Caco-2 (cell line): ENCODE measurements at regions of chr3 and their contacts with region 1.

Region 1: GRCh38 chr3:111717601-111718000 is 122.5 kb upstream of the ZBED2 start:
- DNase-seq: peak; percentile 76
- H3K4me3 ChIP-seq: no peak overlapping the region
- H3K4me3 Mint-ChIP-seq: no peak overlapping the region
- H3K27ac Mint-ChIP-seq: peak overlapping the region; percentile 29
- H3K4me1 ChIP-seq: no peaks in the 10 kb centered on the region
- H3K4me1 Mint-ChIP-seq: peaks cover 12% of the 10 kb centered on the region
- H3K27me3 ChIP-seq: no peaks in the 10 kb centered on the region
- H3K27me3 Mint-ChIP-seq: no peaks in the 10 kb centered on the region
- CTCF ChIP-seq: peak; percentile 85 to 90

Region 2: GRCh38 chr3:111577794-111578685 is 139.6 kb before region 1 on chr3:
- CTCF ChIA-PET with region 1: interaction called, 18 read pairs
- POLR2A ChIA-PET with region 1: no interaction called
- intact Hi-C with region 1: loop called (anchors 1 kb)
- DNase-seq: peak in 1 of 2 experiments; percentile 48
- H3K4me3 ChIP-seq: no peak overlapping the region
- H3K4me3 Mint-ChIP-seq: no peak overlapping the region
- H3K27ac Mint-ChIP-seq: no peak overlapping the region
- H3K4me1 ChIP-seq: peaks cover 20% of the 10 kb centered on the region
- H3K4me1 Mint-ChIP-seq: peaks cover 30% of the 10 kb centered on the region
- H3K27me3 ChIP-seq: no peaks in the 10 kb centered on the region
- H3K27me3 Mint-ChIP-seq: no peaks in the 10 kb centered on the region
- CTCF ChIP-seq: peak in 1 of 2 experiments; percentile 63

Region 3: DNA sequence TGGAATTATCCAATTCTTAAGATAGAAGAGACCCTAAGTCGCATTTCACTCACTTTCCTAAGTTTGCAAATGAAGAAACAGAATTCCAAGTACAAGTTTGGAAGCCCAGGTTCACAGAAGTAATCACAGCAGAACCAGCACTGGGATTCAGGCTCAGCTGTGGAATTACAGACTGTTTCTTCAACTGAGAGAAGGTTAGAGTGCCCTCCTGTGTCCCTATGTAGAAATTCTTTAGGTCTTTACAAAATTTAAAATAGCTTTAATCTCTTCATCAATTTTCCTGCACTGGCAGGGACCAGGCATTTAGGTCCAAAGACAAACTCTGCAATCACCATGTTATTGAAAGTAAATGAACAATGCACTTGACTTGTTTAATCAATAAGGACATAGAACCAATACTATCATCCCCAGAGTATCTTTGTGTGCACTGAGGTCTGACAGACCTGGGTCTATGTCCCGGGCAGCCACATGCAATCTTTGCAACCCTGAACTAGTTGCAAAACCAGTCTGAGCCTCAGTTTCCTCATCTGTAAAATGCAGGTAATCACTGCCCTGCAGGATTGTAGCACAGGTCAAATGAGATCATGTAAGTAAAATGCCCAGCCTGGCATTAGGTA is 26.2 kb before region 1 on chr3:
- CTCF ChIA-PET with region 1: interaction called, 14 read pairs
- POLR2A ChIA-PET with region 1: no interaction called
- intact Hi-C with region 1: loop called (anchors 1 kb)
- DNase-seq: peak in 1 of 2 experiments; percentile 36
- H3K4me3 ChIP-seq: no peak overlapping the region
- H3K4me3 Mint-ChIP-seq: no peak overlapping the region
- H3K27ac Mint-ChIP-seq: no peak overlapping the region
- H3K4me1 ChIP-seq: peaks cover 38% of the 10 kb centered on the region
- H3K4me1 Mint-ChIP-seq: peaks cover 33% of the 10 kb centered on the region
- H3K27me3 ChIP-seq: no peaks in the 10 kb centered on the region
- H3K27me3 Mint-ChIP-seq: no peaks in the 10 kb centered on the region
- CTCF ChIP-seq: peak; percentile 45 to 62

Region 4: DNA sequence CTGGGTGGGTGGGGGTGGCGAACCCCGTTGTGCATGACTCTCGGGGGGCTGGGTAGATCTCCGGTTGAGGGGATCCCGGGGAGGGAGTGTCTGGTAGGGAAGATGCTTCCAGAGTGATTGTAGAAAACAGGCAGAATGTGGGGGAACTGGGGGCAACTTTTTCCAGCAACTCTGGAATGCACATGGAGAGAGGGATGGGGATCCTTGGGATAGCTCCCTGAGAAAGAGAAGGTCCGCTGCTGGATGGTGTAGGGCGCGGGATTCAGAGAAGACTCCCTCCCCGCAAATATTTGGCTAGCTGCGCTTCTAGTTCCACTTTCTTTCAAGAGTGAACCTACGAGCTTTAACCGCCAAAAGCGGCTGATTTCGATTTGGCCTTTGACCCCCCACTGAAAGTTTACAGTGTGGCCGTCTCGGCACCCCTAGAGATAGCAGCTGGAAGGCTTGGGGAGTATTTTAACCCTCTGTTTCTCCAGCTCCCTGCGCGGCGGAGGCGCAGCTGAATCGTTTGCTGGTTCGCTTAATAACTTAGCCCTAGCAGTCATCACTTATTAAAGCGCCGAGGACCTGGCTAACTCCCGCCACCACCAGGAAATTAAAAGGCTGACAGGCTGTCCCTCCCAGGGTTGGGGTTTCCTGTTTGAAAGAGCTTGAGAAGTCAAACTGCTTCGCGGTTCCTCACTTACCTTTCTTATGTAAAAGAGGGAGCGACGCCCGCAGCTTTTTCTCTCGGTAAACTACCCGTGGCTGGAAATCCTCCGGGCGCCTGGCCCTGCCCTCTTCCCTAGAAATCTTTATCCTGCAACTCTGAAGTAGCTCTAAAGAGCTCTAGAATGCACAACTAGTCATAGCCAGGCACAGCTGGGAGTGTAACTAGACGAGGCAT is 142.6 kb after region 1 on chr3:
- CTCF ChIA-PET with region 1: interaction called, 21 read pairs
- POLR2A ChIA-PET with region 1: no interaction called
- intact Hi-C with region 1: loop called (anchors 1 kb)
- DNase-seq: peak; percentile 71 to 73
- H3K4me3 ChIP-seq: peak overlapping the region; percentile 95
- H3K4me3 Mint-ChIP-seq: peak overlapping the region; percentile 93
- H3K27ac Mint-ChIP-seq: peak overlapping the region; percentile 80
- H3K4me1 ChIP-seq: peaks cover 25% of the 10 kb centered on the region
- H3K4me1 Mint-ChIP-seq: peaks cover 47% of the 10 kb centered on the region
- H3K27me3 ChIP-seq: no peaks in the 10 kb centered on the region
- H3K27me3 Mint-ChIP-seq: no peaks in the 10 kb centered on the region
- CTCF ChIP-seq: peak; percentile 26 to 44

Region 5: GRCh38 chr3:111910806-111911205 is 193.2 kb after region 1 on chr3:
- CTCF ChIA-PET with region 1: interaction called, 3 read pairs
- POLR2A ChIA-PET with region 1: no interaction called
- intact Hi-C with region 1: loop called (anchors 5 kb)
- DNase-seq: no peak
- H3K4me3 ChIP-seq: no peak overlapping the region
- H3K4me3 Mint-ChIP-seq: no peak overlapping the region
- H3K27ac Mint-ChIP-seq: no peak overlapping the region
- H3K4me1 ChIP-seq: peaks cover 14% of the 10 kb centered on the region
- H3K4me1 Mint-ChIP-seq: peaks cover 9% of the 10 kb centered on the region
- H3K27me3 ChIP-seq: no peaks in the 10 kb centered on the region
- H3K27me3 Mint-ChIP-seq: no peaks in the 10 kb centered on the region
- CTCF ChIP-seq: no peak

Region 6: DNA sequence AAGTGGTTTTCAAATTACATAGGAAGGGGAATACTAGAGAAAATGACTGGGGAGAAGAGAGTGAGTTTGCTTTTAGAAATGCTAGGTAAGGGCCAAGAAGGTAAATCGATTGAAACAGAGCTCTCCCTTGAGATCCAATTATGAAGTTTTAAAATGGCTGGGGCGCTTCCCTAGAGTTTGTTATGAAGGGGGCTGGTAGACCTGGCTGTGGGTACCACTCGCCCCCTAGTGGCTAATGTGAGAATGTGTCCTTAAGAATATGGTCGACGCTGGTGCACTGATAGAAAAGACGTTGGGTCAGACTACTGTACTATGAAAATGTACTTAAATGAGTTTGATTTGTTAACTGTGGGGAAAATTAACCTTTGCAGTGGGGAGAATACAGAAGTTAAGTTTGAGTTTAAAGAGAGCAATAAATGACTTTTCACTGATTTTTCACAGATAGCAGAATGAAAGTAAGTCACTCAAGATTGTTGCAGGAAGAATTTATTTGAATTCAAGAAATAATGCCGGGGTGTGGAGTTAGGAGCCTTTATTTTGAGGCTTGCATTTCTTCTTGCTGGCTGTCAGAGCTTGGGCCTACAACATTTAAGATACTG is 326.1 kb after region 1 on chr3:
- CTCF ChIA-PET with region 1: no interaction called
- POLR2A ChIA-PET with region 1: no interaction called
- intact Hi-C with region 1: loop called (anchors 10 kb)
- DNase-seq: peak; percentile 66 to 71
- H3K4me3 ChIP-seq: no peak overlapping the region
- H3K4me3 Mint-ChIP-seq: no peak overlapping the region
- H3K27ac Mint-ChIP-seq: no peak overlapping the region
- H3K4me1 ChIP-seq: peaks cover 9% of the 10 kb centered on the region; the same call in 1 of the 2 replicates
- H3K4me1 Mint-ChIP-seq: peaks cover 6% of the 10 kb centered on the region
- H3K27me3 ChIP-seq: no peaks in the 10 kb centered on the region
- H3K27me3 Mint-ChIP-seq: no peaks in the 10 kb centered on the region
- CTCF ChIP-seq: peak; percentile 82 to 88